Left ventricle myocardium inferior (tissue), 1 donor: ENCODE measurements at regions of chr3 and their contacts with region 1.

Region 1: GRCh38 chr3:122942937-122943827 is 84.4 kb downstream of the SEMA5B start:
- DNase-seq: peak; percentile 69
- H3K4me3 ChIP-seq: no peak overlapping the region
- H3K27ac ChIP-seq: peak overlapping the region; percentile 1
- H3K4me1 ChIP-seq: peaks cover 39% of the 10 kb centered on the region
- H3K27me3 ChIP-seq: no peaks in the 10 kb centered on the region
- CTCF ChIP-seq: peak; percentile 88

Region 2: DNA sequence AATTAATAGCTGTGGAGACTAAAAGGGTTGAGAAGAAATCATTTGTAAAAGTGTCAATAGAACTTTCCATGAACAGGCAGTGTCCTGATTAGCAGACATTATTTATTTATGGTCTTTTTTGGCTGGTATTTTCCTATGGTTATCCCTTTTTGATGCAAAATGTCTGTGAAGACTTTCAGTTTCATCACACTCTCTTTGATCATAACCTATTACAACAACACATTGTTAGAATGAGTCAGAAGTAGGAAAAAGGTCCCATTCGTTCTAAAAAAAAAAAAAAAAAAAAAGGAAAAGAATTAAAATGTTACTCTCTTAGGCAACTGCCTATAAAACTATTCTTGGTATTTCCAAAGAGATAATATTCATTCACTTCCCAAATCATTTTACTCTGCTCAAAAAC is 86.2 kb before region 1 on chr3:
- intact Hi-C with region 1: no loop called
- DNase-seq: no peak
- H3K4me3 ChIP-seq: no peak overlapping the region
- H3K27ac ChIP-seq: no peak overlapping the region
- H3K4me1 ChIP-seq: no peaks in the 10 kb centered on the region
- H3K27me3 ChIP-seq: no peaks in the 10 kb centered on the region
- CTCF ChIP-seq: no peak

Region 3: GRCh38 chr3:123028233-123028828 is 85.1 kb after region 1 on chr3:
- intact Hi-C with region 1: loop called (anchors 5 kb)
- DNase-seq: no peak
- H3K4me3 ChIP-seq: peak overlapping the region; percentile 79
- H3K27ac ChIP-seq: peak overlapping the region; percentile 68
- H3K4me1 ChIP-seq: peaks cover 50% of the 10 kb centered on the region
- H3K27me3 ChIP-seq: peaks cover 24% of the 10 kb centered on the region
- CTCF ChIP-seq: peak; percentile 60